ENCODE measurements at regions of chr7 and their contacts with region 1.

Region 1: GRCh38 chr7:81447351-81447952 is 322.4 kb downstream of the HGF start:
- DNase-seq: peak; percentile 47 to 51
- H3K4me3 ChIP-seq: no peak overlapping the region
- H3K4me3 Mint-ChIP-seq: no peak overlapping the region
- H3K27ac Mint-ChIP-seq: no peak overlapping the region
- H3K4me1 ChIP-seq: no peaks in the 10 kb centered on the region
- H3K4me1 Mint-ChIP-seq: peaks cover 11% of the 10 kb centered on the region
- H3K27me3 ChIP-seq: no peaks in the 10 kb centered on the region
- H3K27me3 Mint-ChIP-seq: no peaks in the 10 kb centered on the region
- CTCF ChIP-seq: peak; percentile 62 to 72

Region 2: DNA sequence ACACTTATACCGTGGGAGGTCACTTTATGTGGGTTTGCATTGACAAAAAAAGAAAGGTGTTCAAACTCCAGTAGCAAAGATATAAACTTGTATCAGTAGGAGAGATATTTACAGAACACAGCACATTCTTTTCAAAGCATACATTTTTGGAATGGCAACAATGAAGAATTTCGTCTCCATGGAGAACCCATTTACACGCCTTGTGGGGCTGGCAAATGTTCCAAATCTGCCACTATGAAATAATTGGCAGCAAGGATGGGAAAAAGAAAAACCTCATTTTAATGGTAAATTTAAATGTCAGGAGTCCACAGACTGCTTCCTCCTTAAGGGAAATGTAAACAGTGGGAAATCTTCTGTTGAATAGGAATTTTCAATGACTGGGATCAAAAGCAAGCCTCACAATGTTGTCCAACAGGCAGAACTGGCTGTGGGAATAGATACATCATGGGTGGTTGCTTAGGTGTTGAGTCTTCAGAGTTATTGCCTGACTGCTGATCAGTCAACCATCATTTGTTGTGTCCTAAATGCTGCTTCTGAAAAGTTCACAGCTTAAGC is 272.1 kb before region 1 on chr7:
- CTCF ChIA-PET with region 1: no interaction called
- POLR2A ChIA-PET with region 1: no interaction called
- intact Hi-C with region 1: loop called (anchors 5 kb)
- DNase-seq: peak; percentile 74 to 78
- H3K4me3 ChIP-seq: no peak overlapping the region
- H3K4me3 Mint-ChIP-seq: peak overlapping the region; percentile 47
- H3K27ac Mint-ChIP-seq: peak overlapping the region; percentile 93
- H3K4me1 ChIP-seq: peaks cover 32% of the 10 kb centered on the region
- H3K4me1 Mint-ChIP-seq: peaks cover 17% of the 10 kb centered on the region
- H3K27me3 ChIP-seq: no peaks in the 10 kb centered on the region
- H3K27me3 Mint-ChIP-seq: no peaks in the 10 kb centered on the region
- CTCF ChIP-seq: no peak

Region 3: GRCh38 chr7:81244224-81244623 is 203.2 kb before region 1 on chr7:
- CTCF ChIA-PET with region 1: no interaction called
- POLR2A ChIA-PET with region 1: no interaction called
- intact Hi-C with region 1: loop called (anchors 2 kb)
- DNase-seq: peak in 1 of 2 experiments; percentile 10
- H3K4me3 ChIP-seq: no peak overlapping the region
- H3K4me3 Mint-ChIP-seq: no peak overlapping the region
- H3K27ac Mint-ChIP-seq: no peak overlapping the region
- H3K4me1 ChIP-seq: no peaks in the 10 kb centered on the region
- H3K4me1 Mint-ChIP-seq: no peaks in the 10 kb centered on the region
- H3K27me3 ChIP-seq: no peaks in the 10 kb centered on the region
- H3K27me3 Mint-ChIP-seq: no peaks in the 10 kb centered on the region
- CTCF ChIP-seq: peak in 1 of 2 experiments; percentile 10

Region 4: DNA sequence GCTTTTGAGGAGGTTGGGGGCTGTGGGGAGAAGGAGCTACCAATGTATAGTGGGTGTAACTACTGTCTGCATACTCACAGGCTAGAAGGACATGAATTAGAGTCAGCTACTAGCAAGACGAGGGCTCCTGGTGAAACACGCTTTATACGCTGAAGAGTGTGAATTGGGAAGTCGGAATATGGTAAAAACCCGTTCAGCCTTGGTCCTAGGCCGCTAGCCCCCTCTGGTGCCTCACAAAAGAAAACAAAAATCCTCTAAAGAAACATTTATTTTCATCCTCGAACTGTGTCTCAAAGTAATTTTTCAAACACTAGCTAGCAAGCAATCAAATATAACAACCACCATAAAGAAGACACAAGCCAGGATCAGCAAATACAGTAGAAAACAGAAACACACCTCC is 190.5 kb before region 1 on chr7:
- CTCF ChIA-PET with region 1: no interaction called
- POLR2A ChIA-PET with region 1: no interaction called
- intact Hi-C with region 1: loop called (anchors 5 kb)
- DNase-seq: peak in 1 of 2 experiments; percentile 13
- H3K4me3 ChIP-seq: no peak overlapping the region
- H3K4me3 Mint-ChIP-seq: no peak overlapping the region
- H3K27ac Mint-ChIP-seq: no peak overlapping the region
- H3K4me1 ChIP-seq: peaks cover 9% of the 10 kb centered on the region; the same call in 1 of the 2 replicates
- H3K4me1 Mint-ChIP-seq: peaks cover 9% of the 10 kb centered on the region
- H3K27me3 ChIP-seq: no peaks in the 10 kb centered on the region
- H3K27me3 Mint-ChIP-seq: no peaks in the 10 kb centered on the region
- CTCF ChIP-seq: peak in 1 of 2 experiments; percentile 17

Region 5: GRCh38 chr7:81321949-81322348 is 125.5 kb before region 1 on chr7:
- CTCF ChIA-PET with region 1: no interaction called
- POLR2A ChIA-PET with region 1: no interaction called
- intact Hi-C with region 1: loop called (anchors 5 kb)
- DNase-seq: peak in 1 of 2 experiments; percentile 6
- H3K4me3 ChIP-seq: no peak overlapping the region
- H3K4me3 Mint-ChIP-seq: no peak overlapping the region
- H3K27ac Mint-ChIP-seq: no peak overlapping the region
- H3K4me1 ChIP-seq: peaks cover 12% of the 10 kb centered on the region
- H3K4me1 Mint-ChIP-seq: peaks cover 11% of the 10 kb centered on the region
- H3K27me3 ChIP-seq: no peaks in the 10 kb centered on the region
- H3K27me3 Mint-ChIP-seq: no peaks in the 10 kb centered on the region
- CTCF ChIP-seq: no peak

Measured in Caco-2 (cell line).